A549 (cell line): ENCODE measurements at regions of chr7 and their contacts with region 1.

Region 1: GRCh38 chr7:100407285-100408180 is 21.0 kb downstream of the ZCWPW1 start:
- DNase-seq: peak; percentile 72 to 84
- ATAC-seq: peak; percentile 93 to 94
- H3K4me3 ChIP-seq: no peak overlapping the region
- H3K27ac ChIP-seq: no peak overlapping the region
- H3K4me1 ChIP-seq: no peaks in the 10 kb centered on the region
- CTCF ChIP-seq: peak; percentile 72
- EP300 ChIP-seq: no peak
- POLR2A ChIP-seq: no peak
- RAD21 ChIP-seq: peak; percentile 70 to 77

Region 2: GRCh38 chr7:100384628-100385294 is 22.8 kb before region 1 on chr7:
- CTCF ChIA-PET with region 1: interaction called, 15 read pairs
- POLR2A ChIA-PET with region 1: no interaction called
- DNase-seq: no peak
- ATAC-seq: no peak
- H3K4me3 ChIP-seq: no peak overlapping the region
- H3K27ac ChIP-seq: no peak overlapping the region
- H3K4me1 ChIP-seq: no peaks in the 10 kb centered on the region
- CTCF ChIP-seq: no peak
- EP300 ChIP-seq: no peak
- POLR2A ChIP-seq: no peak
- RAD21 ChIP-seq: no peak

Region 3: GRCh38 chr7:100390286-100391009 is 17.1 kb before region 1 on chr7:
- CTCF ChIA-PET with region 1: interaction called, 20 read pairs
- POLR2A ChIA-PET with region 1: no interaction called
- DNase-seq: no peak
- ATAC-seq: 0 out of 6 replicates have a peak, but pooled peaks of 1 of the 2 experiments have one; percentile 23
- H3K4me3 ChIP-seq: no peak overlapping the region
- H3K27ac ChIP-seq: no peak overlapping the region
- H3K4me1 ChIP-seq: no peaks in the 10 kb centered on the region
- CTCF ChIP-seq: no peak
- EP300 ChIP-seq: no peak
- POLR2A ChIP-seq: no peak
- RAD21 ChIP-seq: no peak

Region 4: DNA sequence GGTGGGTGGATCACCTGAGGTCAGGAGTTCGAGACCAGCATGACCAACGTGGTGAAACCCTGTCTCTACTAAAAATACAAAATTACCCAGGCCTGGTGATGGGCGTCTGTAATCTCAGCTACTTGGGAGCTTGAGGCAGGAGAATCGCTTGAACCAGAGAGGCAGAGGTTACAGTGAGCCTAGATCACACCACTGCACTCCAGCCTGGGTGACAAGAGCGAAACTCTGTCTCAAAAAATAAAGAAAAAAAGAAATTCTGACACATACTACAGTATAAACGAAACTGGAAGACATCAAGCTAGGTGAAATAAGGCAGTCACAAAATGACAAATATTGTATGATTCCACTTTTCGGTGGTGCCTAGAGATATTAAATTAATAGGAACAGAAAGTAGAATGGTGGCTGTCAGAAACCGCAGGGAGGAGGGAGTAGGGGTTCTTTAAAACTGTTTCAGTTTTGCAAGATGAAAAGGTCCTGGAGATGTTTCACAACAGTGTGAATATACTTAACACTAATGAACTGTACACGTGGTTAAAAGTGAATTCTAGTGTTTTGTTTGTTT is 11.0 kb before region 1 on chr7:
- CTCF ChIA-PET with region 1: interaction called, 20 read pairs
- POLR2A ChIA-PET with region 1: no interaction called
- DNase-seq: no peak
- ATAC-seq: no peak
- H3K4me3 ChIP-seq: no peak overlapping the region
- H3K27ac ChIP-seq: no peak overlapping the region
- H3K4me1 ChIP-seq: no peaks in the 10 kb centered on the region
- CTCF ChIP-seq: no peak
- EP300 ChIP-seq: no peak
- POLR2A ChIP-seq: no peak
- RAD21 ChIP-seq: no peak

Region 5: GRCh38 chr7:100418930-100419659 is 11.6 kb after region 1 on chr7:
- CTCF ChIA-PET with region 1: interaction called, 48 read pairs
- POLR2A ChIA-PET with region 1: no interaction called
- DNase-seq: no peak
- ATAC-seq: peak; percentile 63 to 74; a peak in 5 of 6 replicates
- H3K4me3 ChIP-seq: no peak overlapping the region
- H3K27ac ChIP-seq: no peak overlapping the region
- H3K4me1 ChIP-seq: no peaks in the 10 kb centered on the region
- CTCF ChIP-seq: no peak
- EP300 ChIP-seq: no peak
- POLR2A ChIP-seq: no peak
- RAD21 ChIP-seq: no peak